Endothelial cell of umbilical vein (primary cell): ENCODE measurements at regions of chr10 and their contacts with region 1.

Region 1: GRCh38 chr10:88990384-88991160 is at the start of gene FAS:
- DNase-seq: peak; percentile 53
- H3K4me3 ChIP-seq: peak within 1 kb of the TSS; percentile 76 to 84 (median 84)
- H3K27ac ChIP-seq: peak within 1 kb of the TSS; percentile 6
- H3K4me1 ChIP-seq: peaks cover 12% of the 10 kb centered on the region
- H3K27me3 ChIP-seq: peaks cover 11 to 22% of the 10 kb centered on the region in 2 experiments
- CTCF ChIP-seq: no peak
- POLR2A ChIP-seq: no peak
- total RNA-seq, gene FAS: 6.0 and 6.1 TPM in 2 replicates

Region 2: GRCh38 chr10:88835096-88835909 is 155.3 kb before region 1 on chr10:
- CTCF ChIA-PET with region 1: interaction called, 17 read pairs
- POLR2A ChIA-PET with region 1: no interaction called
- dilution Hi-C with region 1: no loop called
- intact Hi-C with region 1: loop called (anchors 1 kb)
- DNase-seq: peak; percentile 85
- H3K4me3 ChIP-seq: no peak overlapping the region
- H3K27ac ChIP-seq: no peak overlapping the region
- H3K4me1 ChIP-seq: no peaks in the 10 kb centered on the region
- H3K27me3 ChIP-seq: peaks cover 0 to 2% of the 10 kb centered on the region in 2 experiments
- CTCF ChIP-seq: peak; percentile 83 to 88
- POLR2A ChIP-seq: no peak

Region 3: DNA sequence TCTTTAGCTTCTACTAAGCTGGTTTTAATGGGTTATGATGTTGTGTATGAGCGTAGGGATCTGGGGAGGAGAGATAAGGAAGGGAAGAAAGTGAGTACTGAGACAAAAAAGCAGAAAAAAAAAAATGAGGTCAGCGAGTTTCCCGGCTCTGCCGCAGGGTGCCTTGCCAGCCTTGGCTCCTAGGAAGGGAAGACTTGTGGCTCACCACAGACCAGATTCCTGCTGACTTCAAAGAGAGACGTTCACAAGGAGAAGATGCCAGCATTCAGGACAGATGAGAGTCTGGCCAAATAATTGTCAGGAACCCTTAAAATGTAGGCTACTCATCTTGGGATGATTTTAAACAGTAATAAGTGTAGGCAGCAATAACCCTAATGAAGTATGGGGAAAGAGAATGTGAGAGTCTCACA is 11.4 kb before region 1 on chr10:
- CTCF ChIA-PET with region 1: interaction called, 18 read pairs
- POLR2A ChIA-PET with region 1: no interaction called
- dilution Hi-C with region 1: no loop called
- intact Hi-C with region 1: no loop called
- DNase-seq: no peak
- H3K4me3 ChIP-seq: no peak overlapping the region
- H3K27ac ChIP-seq: no peak overlapping the region
- H3K4me1 ChIP-seq: peaks cover 21% of the 10 kb centered on the region
- H3K27me3 ChIP-seq: no peaks in the 10 kb centered on the region
- CTCF ChIP-seq: no peak
- POLR2A ChIP-seq: no peak

Region 4: GRCh38 chr10:89029785-89030437 is 39.3 kb after region 1 on chr10:
- CTCF ChIA-PET with region 1: interaction called, 11 read pairs
- POLR2A ChIA-PET with region 1: no interaction called
- dilution Hi-C with region 1: no loop called
- intact Hi-C with region 1: loop called (anchors 1 kb)
- DNase-seq: peak; percentile 79
- H3K4me3 ChIP-seq: no peak overlapping the region
- H3K27ac ChIP-seq: no peak overlapping the region
- H3K4me1 ChIP-seq: peaks cover 19% of the 10 kb centered on the region
- H3K27me3 ChIP-seq: peaks cover 0 to 2% of the 10 kb centered on the region in 2 experiments
- CTCF ChIP-seq: peak; percentile 66 to 84
- POLR2A ChIP-seq: no peak

Region 5: DNA sequence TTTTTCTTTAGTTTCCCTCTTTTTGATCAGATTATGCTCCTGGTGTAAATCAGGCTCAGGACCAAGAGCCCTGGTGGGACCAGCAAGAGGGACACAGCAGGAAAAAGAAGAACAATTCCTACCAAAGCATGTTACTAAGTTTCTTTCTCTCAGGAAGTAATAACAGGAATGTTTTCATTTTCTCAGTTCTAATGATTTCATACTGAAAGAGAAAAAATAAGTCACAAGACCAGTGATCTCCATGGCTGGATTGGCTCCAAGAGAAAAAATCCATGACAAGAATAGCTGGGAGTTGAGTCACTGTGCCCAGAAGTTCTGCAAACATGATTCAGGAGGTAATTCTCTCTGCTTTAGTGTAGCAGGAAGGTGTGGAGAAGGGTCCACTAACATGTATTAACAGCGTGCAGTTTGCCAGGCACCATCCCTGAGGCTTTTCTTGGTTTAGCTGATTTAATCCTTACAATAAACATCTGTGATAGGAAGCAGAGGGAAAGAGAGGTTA is 287.5 kb after region 1 on chr10:
- CTCF ChIA-PET with region 1: no interaction called
- POLR2A ChIA-PET with region 1: no interaction called
- dilution Hi-C with region 1: no loop called
- intact Hi-C with region 1: loop called (anchors 1 kb)
- DNase-seq: peak; percentile 98
- H3K4me3 ChIP-seq: peak overlapping the region in 1 of 3 experiments; percentile 12
- H3K27ac ChIP-seq: peak overlapping the region; percentile 49
- H3K4me1 ChIP-seq: peaks cover 38% of the 10 kb centered on the region
- H3K27me3 ChIP-seq: peaks cover 38 to 72% of the 10 kb centered on the region in 2 experiments
- CTCF ChIP-seq: no peak
- POLR2A ChIP-seq: no peak

Region 6: GRCh38 chr10:89414146-89414878 is 423.7 kb after region 1 on chr10 and contains the start of gene IFIT5:
- CTCF ChIA-PET with region 1: no interaction called
- POLR2A ChIA-PET with region 1: no interaction called
- dilution Hi-C with region 1: no loop called
- intact Hi-C with region 1: no loop called
- DNase-seq: peak; percentile 80
- H3K4me3 ChIP-seq: peak within 1 kb of the TSS; percentile 65 to 89 (median 76)
- H3K27ac ChIP-seq: no peak within 1 kb of the TSS
- H3K4me1 ChIP-seq: no peaks in the 10 kb centered on the region
- H3K27me3 ChIP-seq: no peaks in the 10 kb centered on the region
- CTCF ChIP-seq: no peak
- POLR2A ChIP-seq: peak; percentile 49
- total RNA-seq, gene IFIT5: 3.2 and 4.0 TPM in 2 replicates